RWPE1 (cell line): ENCODE measurements at regions of chr14 and their contacts with region 1.

Region 1: DNA sequence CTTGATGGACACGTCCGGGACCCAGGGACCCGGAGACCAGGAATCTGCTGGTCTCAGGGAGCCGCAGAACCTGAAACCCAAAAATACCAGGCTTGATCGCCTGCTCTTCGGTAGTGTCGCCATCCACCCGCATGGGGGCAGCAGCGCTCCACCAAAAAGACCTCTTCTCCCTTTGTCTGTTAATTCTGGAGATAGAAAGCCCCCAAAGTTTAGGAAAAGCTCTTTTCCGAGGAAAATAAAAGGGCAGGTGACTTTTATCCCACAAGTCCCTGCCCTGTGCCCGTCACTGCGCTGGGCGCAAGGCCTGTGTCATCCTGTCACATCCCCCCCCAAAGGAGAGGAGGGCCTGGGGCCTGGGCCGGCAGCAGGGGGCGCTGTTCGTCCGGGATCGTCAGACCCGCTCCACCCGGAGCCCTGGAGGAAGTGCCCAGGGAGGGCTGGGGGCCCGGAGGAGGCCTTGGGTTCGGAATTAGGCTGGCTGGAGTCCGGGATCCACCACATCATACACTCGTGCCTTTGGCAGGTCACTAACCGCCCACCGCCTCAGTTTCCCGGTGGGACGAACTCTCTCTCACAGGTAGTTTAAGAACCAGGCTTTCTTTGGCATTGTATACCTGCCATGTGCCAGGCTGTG is 31.9 kb downstream of the DAD1 start:
- DNase-seq: peak; percentile 70
- H3K27ac ChIP-seq: peak overlapping the region; percentile 90
- CTCF ChIP-seq: peak; percentile 98

Region 2: DNA sequence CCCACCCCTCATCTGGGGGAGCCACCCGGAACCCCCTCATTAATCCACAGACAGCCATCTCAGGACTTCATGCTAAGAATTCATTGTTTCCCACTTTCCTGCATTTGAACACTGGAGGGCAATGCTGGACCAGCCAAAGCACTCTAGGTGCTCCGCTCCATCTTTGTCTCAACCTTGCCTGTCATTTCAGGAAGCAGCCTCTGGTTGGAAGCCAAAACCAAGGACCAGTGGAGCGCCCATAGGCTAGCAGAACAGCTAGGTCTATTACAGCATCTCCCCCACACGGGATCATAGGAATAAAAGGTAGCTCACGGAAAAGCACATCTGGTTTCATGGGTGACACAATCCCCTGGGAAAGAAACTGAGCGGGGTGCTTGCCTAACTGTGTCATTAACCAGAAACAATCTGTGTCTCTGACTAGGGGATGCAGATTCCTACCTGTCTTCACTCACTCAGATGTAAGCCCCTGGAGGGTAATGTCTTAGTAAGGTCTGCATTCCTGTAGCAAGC is 165.1 kb before region 1 on chr14:
- CTCF ChIA-PET with region 1: interaction called, 10 read pairs
- POLR2A ChIA-PET with region 1: no interaction called
- DNase-seq: peak; percentile 64
- H3K27ac ChIP-seq: no peak overlapping the region
- CTCF ChIP-seq: peak; percentile 63

Region 3: DNA sequence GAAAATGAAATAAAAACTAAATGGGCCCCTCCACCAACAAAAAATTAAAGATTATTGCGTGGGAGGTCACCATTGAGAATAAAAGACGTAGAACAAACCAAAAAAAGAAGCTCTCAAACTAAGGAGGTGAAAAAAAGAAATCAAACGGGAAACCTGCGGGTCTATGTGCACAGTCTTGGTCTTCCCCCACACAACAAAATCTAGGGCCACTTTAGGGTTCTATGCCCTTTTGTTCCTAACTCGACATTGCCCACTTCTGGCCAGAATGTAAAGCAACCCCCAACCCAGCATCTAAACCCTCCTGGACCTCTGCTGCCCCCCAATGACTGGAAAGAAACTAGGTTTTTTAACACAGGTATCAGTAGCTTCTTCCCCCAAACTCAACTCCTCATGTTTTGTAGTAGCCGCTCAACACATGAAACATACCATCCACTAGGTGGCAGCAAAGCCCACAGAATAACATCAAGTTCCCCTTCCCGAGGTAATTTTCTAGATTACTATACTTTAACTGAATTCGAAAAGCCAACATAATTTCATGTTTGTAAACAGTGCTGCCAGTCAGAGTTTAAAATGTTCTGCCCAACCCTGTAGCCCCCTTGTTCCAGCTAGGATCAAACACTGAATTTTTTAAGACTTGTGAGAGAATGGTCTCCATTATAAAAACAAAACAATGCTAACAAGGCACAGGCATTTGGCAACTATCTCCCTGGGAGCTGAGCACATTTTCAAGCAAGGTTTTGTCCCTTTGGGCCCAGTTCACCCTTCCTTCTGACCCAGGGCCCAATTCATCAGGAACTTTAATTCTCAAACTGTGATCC is 13.2 kb after region 1 on chr14:
- CTCF ChIA-PET with region 1: interaction called, 13 read pairs
- POLR2A ChIA-PET with region 1: no interaction called
- DNase-seq: peak; percentile 64
- H3K27ac ChIP-seq: peak overlapping the region; percentile 64
- CTCF ChIP-seq: peak; percentile 76

Region 4: GRCh38 chr14:22602849-22603248 is 45.7 kb after region 1 on chr14:
- CTCF ChIA-PET with region 1: no interaction called
- POLR2A ChIA-PET with region 1: no interaction called
- DNase-seq: peak; percentile 60
- H3K27ac ChIP-seq: no peak overlapping the region
- CTCF ChIP-seq: no peak

Region 5: GRCh38 chr14:22653012-22653621 is 96.0 kb after region 1 on chr14:
- CTCF ChIA-PET with region 1: interaction called, 17 read pairs
- POLR2A ChIA-PET with region 1: no interaction called
- DNase-seq: peak; percentile 78
- H3K27ac ChIP-seq: no peak overlapping the region
- CTCF ChIP-seq: peak; percentile 84